Gastrocnemius medialis (tissue), 4 donors: ENCODE measurements at regions of chr11 and their contacts with region 1.

Region 1: GRCh38 chr11:114439229-114440120 is at the start of gene REXO2:
- DNase-seq: peak; percentile 95
- ATAC-seq: peak; percentile 95
- H3K4me3 ChIP-seq: peak within 1 kb of the TSS; percentile 93 to 95 (median 94)
- H3K27ac ChIP-seq: peak within 1 kb of the TSS; percentile 89 to 95 (median 90)
- H3K4me1 ChIP-seq: peaks cover 8 to 24% of the 10 kb centered on the region in 2 donors
- H3K27me3 ChIP-seq: no peaks in the 10 kb centered on the region
- CTCF ChIP-seq: peak in 3 of 5 experiments; percentile 20 to 39 (median 37)
- POLR2A ChIP-seq: peak; percentile 86 to 89
- total RNA-seq, gene REXO2: 29.3 to 177 (median 91.2) TPM

Region 2: GRCh38 chr11:114148013-114148382 is 291.5 kb before region 1 on chr11:
- in situ Hi-C with region 1: no loop called
- intact Hi-C with region 1: no loop called
- DNase-seq: peak in 1 of 2 donors; percentile 38
- ATAC-seq: peak; percentile 8 to 14
- H3K4me3 ChIP-seq: no peak overlapping the region
- H3K27ac ChIP-seq: peak overlapping the region; percentile 94 to 99 (median 96)
- H3K4me1 ChIP-seq: peaks cover 97 to 98% of the 10 kb centered on the region in 2 donors
- H3K27me3 ChIP-seq: no peaks in the 10 kb centered on the region
- CTCF ChIP-seq: no peak
- POLR2A ChIP-seq: no peak

Region 3: GRCh38 chr11:114280696-114281095 is 158.8 kb before region 1 on chr11:
- in situ Hi-C with region 1: no loop called
- intact Hi-C with region 1: loop called (anchors 5 kb)
- DNase-seq: peak in 1 of 2 donors; percentile 61
- ATAC-seq: peak; percentile 7 to 29
- H3K4me3 ChIP-seq: no peak overlapping the region
- H3K27ac ChIP-seq: peak overlapping the region in 3 of 4 donors; percentile 33 to 56 (median 39)
- H3K4me1 ChIP-seq: peaks cover 8 to 10% of the 10 kb centered on the region in 2 donors
- H3K27me3 ChIP-seq: no peaks in the 10 kb centered on the region
- CTCF ChIP-seq: peak in 4 of 5 experiments; percentile 29 to 61 (median 42)
- POLR2A ChIP-seq: no peak

Region 4: GRCh38 chr11:114340311-114341131 is 99.0 kb before region 1 on chr11:
- in situ Hi-C with region 1: loop called in 1 of 4 experiments (anchors 10 kb)
- intact Hi-C with region 1: loop called (anchors 2 kb)
- DNase-seq: peak in 1 of 2 donors; percentile 47
- ATAC-seq: peak; percentile 70 to 88
- H3K4me3 ChIP-seq: peak overlapping the region in 3 of 4 donors; percentile 18 to 37 (median 34)
- H3K27ac ChIP-seq: peak overlapping the region in 3 of 4 donors; percentile 2 to 29 (median 14)
- H3K4me1 ChIP-seq: peaks cover 7 to 8% of the 10 kb centered on the region in 2 donors
- H3K27me3 ChIP-seq: no peaks in the 10 kb centered on the region
- CTCF ChIP-seq: peak; percentile 61 to 82 (median 79)
- POLR2A ChIP-seq: no peak

Region 5: GRCh38 chr11:114348200-114349191 is 91.0 kb before region 1 on chr11:
- in situ Hi-C with region 1: loop called in 1 of 4 experiments (anchors 10 kb)
- intact Hi-C with region 1: loop called (anchors 2 kb)
- DNase-seq: no peak
- ATAC-seq: peak in 1 of 2 donors; percentile 74
- H3K4me3 ChIP-seq: no peak overlapping the region
- H3K27ac ChIP-seq: no peak overlapping the region
- H3K4me1 ChIP-seq: no peaks in the 10 kb centered on the region
- H3K27me3 ChIP-seq: no peaks in the 10 kb centered on the region
- CTCF ChIP-seq: peak; percentile 20 to 51 (median 47)
- POLR2A ChIP-seq: no peak

Region 6: DNA sequence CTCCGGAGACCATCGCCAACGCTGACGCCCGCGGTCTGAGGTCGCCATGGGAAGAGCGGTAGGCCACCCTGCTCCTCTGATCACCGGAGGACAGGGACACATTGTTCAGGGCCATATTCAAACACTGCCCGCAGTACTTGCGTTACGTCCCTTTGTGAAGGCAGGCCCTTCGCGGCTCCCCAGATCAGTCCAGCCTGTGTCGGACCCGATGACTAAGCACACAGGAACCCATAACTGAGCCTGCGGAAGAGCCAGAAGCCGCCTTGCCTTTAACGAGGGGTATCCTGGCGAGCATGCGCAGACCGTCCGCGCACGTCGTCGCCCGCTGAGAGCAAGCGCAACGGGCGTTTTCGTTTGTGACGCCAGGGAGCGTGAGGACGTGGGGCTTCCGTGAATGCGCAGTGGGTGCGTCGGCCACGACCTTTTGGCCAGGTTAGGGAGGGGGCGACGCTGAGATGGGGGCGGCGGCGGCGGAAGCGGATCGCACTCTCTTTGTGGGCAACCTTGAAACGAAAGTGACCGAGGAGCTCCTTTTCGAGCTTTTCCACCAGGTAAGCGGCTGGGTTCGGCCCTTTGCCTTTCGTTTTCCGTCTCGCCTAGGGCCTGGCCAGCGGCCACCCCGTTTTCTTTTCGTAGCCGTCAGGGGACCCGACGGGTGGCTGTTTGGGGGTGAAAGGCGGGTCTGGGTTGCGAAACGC is 39.1 kb before region 1 on chr11 and contains the starts of genes C11orf71 and RBM7:
- in situ Hi-C with region 1: loop called in 1 of 4 experiments (anchors 5 kb)
- intact Hi-C with region 1: loop called (anchors 1 kb)
- DNase-seq: peak; percentile 97 to 98
- ATAC-seq: peak; percentile 92 to 96
- H3K4me3 ChIP-seq: peak within 1 kb of the TSS; percentile 66 to 97 (median 83)
- H3K27ac ChIP-seq: peak within 1 kb of the TSS; percentile 94 to 100 (median 98)
- H3K4me1 ChIP-seq: peaks cover 27 to 41% of the 10 kb centered on the region in 2 donors
- H3K27me3 ChIP-seq: no peaks in the 10 kb centered on the region
- CTCF ChIP-seq: no peak
- POLR2A ChIP-seq: peak; percentile 85 to 94
- total RNA-seq, gene C11orf71: 3.4 to 18.0 (median 8.7) TPM
- total RNA-seq, gene RBM7: 6.2 to 14.9 (median 11.6) TPM

Region 7: GRCh38 chr11:114425921-114426679 is 13.4 kb before region 1 on chr11:
- in situ Hi-C with region 1: no loop called
- intact Hi-C with region 1: no loop called
- DNase-seq: no peak
- ATAC-seq: no peak
- H3K4me3 ChIP-seq: no peak overlapping the region
- H3K27ac ChIP-seq: no peak overlapping the region
- H3K4me1 ChIP-seq: no peaks in the 10 kb centered on the region
- H3K27me3 ChIP-seq: no peaks in the 10 kb centered on the region
- CTCF ChIP-seq: no peak
- POLR2A ChIP-seq: no peak

Region 8: DNA sequence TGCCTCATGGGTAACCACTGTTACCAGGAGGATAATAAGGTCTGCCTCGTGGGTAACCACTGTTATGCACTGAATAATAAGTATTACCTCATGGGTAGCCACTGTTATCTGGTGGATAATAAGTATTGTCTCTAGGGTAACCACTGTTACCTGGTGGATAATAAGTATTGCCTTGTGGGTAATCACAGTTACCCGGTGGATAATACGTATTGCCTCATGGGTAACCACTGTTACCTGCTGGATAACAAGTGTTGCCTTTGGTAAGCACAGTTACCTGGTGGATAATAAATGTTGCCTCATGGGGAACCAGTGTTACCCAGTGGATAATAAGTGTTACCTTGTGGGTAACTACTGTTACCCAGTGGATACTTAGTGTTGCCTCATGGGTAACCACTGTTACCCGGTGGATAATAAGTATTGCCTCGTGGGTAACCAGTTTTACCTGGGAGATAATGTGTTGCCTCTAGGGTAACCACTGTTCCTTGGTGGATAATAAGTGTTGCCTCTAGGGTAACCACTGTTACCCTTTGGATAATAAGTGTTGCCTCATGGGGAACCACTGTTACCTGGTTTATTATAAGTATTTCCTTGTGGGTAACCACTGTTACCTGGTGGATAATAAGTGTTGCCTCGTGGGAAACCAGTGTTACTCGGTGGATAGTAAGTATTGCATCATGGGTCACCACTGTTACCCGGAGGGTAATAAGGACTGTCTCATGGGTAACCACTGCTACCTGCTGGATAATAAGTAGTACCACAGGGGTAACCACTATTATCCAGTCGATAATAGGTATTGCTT is 166.7 kb after region 1 on chr11:
- in situ Hi-C with region 1: no loop called
- intact Hi-C with region 1: no loop called
- DNase-seq: no peak
- ATAC-seq: no peak
- H3K4me3 ChIP-seq: no peak overlapping the region
- H3K27ac ChIP-seq: no peak overlapping the region
- H3K4me1 ChIP-seq: no peaks in the 10 kb centered on the region
- H3K27me3 ChIP-seq: no peaks in the 10 kb centered on the region
- CTCF ChIP-seq: no peak
- POLR2A ChIP-seq: no peak